GM13977 (cell line): ENCODE measurements at regions of chr2 and their contacts with region 1.

Region 1: DNA sequence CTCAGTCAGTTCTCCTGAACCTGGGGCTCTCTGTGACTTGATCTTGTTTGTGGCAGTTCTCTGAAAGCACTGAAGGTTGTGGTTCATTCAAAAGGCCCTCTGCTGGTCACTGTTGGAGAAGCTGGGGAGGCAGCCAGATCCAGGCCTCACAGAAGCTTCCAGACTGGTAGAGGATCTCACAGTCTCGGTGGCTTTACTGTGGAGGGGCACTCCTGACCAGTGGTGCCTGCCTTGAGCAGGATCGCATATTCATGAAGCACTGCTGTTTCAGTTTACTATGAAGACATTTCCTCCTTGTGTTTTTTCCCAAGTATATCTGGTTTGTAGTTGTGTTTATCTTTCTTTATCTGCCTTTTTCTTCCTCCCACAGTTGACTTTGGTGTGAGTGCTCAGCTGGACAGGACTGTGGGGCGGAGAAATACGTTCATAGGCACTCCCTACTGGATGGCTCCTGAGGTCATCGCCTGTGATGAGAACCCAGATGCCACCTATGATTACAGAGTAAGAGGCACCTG is 133.9 kb downstream of the MAP4K4 start:
- DNase-seq: peak; percentile 51
- CTCF ChIP-seq: peak; percentile 74

Region 2: DNA sequence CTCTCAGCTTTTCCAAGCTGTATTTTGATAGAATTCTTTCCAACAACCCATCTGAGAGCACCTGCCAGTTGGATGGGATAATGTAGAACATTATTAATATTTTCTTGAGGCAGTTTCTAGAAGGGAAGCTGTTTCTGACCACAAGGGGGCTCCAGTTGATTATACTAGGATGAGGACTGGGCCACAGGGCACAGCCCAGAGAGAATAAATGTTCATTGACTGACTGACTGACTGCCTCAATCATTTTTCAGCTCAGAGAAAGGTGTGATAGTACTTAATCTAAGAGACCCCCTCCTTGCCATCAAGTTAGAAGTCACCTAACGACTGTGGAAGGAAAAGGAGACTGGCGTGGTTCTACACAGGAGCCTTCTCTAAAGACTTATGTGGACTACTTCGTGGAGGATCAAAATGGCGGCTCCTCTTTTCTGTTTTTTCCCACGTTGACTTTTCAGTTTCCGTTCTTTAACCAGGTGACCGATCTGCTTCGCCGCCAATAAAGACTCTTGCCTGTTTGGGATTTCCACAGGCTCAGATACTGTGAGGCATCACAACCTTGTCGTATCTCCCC is 412.2 kb before region 1 on chr2:
- in situ Hi-C with region 1: loop called (anchors 25 kb)
- DNase-seq: peak; percentile 70
- CTCF ChIP-seq: peak; percentile 68

Region 3: DNA sequence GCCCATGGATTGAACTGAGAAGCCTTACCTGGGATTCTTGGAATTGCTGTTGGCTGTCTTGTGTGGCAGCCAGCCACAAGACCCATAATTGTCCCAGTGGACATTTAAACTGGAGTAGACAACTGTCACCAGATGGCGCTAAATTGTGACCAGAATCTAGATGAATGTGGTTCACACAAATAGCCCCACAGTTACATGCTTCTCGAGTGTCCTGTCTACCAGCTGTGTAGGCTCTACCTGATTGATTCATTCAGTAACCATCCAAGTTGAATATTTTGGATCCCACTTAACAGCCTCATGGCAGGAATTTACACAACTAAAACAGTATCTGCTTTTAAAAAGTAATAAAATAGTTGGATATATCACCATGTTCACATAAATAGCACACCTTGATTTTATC is 60.7 kb before region 1 on chr2:
- in situ Hi-C with region 1: no loop called
- DNase-seq: peak; percentile 46
- CTCF ChIP-seq: peak; percentile 60

Region 4: DNA sequence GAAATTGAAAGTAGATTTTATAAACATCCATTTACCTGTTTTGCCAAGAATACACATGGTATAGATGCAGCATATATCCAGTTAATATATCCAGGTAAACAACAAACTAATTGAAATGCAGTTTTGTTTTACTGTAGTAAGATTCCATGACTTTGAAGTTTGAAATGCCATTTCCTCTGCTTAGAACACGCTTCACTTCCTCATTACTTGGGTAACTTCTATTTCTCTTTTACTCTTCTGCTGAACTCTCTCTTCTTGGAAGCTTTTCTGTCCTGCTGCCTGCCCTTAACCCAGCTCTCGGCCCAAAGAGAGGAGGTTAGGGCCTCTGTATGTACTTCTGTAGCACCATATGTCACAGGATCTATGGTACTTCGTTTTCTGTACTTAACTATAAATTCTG is 341.3 kb after region 1 on chr2:
- in situ Hi-C with region 1: no loop called
- DNase-seq: no peak
- CTCF ChIP-seq: no peak